ENCODE measurements at regions of chr11 and their contacts with region 1.

Region 1: GRCh38 chr11:128172046-128172878 is 415.1 kb downstream of the ETS1 start:
- DNase-seq: peak; percentile 78
- CTCF ChIP-seq: peak; percentile 84

Region 2: DNA sequence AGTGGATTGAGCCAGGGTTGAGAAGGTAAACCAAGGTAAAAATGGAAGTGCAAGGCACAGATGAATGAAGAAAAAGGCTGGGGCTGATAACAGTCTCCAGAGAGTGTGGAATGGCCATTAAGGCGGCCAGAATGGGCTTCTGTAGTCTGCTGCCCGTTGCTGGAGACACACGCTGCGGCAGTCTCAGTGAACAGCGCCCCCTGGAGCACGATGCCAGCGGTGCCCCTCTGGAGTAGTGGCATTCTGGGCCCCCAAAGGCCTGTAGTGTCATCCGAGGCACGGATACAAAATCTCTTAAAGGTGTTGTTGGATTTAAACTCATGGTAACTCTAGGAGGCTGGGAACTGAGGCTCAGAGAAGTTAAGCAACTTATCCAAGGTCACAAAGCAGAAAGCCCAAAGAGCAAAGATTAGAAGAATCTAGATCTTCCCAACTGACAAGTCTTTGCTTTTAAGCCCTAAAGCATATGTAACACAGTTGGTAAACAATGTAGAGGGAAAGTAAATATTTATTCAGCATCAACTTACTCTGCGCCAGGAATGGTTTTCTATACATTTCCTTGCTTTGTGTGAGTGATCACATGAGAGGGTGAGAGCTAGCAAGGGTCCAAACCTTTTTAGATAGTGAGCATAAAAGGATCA is 676.7 kb after region 1 on chr11:
- CTCF ChIA-PET with region 1: interaction called, 12 read pairs
- POLR2A ChIA-PET with region 1: no interaction called
- DNase-seq: peak; percentile 74
- CTCF ChIP-seq: peak; percentile 82

Region 3: GRCh38 chr11:128859563-128860441 is 687.5 kb after region 1 on chr11:
- CTCF ChIA-PET with region 1: interaction called, 15 read pairs
- POLR2A ChIA-PET with region 1: no interaction called
- DNase-seq: peak; percentile 86
- CTCF ChIP-seq: peak; percentile 94

Region 4: GRCh38 chr11:128956401-128957201 is 784.3 kb after region 1 on chr11:
- CTCF ChIA-PET with region 1: interaction called, 21 read pairs
- POLR2A ChIA-PET with region 1: no interaction called
- DNase-seq: peak; percentile 59
- CTCF ChIP-seq: peak; percentile 39